ENCODE measurements at regions of chr12 and their contacts with region 1.

Region 1: DNA sequence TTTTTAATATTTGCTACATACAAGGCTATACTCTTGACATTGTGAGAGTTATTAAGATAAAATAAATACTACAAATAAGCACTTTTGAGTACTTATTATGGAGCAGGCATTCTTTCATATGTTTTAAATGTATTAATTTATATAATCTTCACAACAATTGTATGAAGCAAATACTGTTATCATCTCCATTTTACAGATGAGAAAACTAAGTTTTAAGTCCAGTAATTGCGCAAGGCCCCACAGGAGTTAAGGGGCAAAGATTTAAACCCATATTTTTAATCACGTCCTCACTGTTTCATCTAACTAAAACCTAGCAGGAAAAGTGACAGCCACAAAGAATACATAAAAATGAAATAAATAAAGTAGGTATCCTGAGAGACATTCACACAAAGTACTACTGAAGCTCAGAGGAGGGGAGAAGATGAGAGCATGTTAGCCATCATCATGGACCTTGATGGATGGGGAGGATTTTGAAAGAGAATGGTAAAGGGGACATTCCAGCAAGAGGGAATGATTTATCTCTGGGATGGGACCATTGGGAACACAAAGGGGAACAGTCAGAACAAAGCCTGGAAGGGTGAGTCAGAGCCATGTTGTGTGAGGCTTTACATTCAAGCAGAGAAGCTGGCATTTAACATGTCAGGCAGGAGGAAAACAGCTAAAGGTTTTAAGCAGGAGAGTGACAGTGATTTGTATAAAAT is 174.8 kb downstream of the SYT10 start:
- DNase-seq: no peak
- H3K4me3 ChIP-seq: no peak overlapping the region
- H3K27ac ChIP-seq: no peak overlapping the region
- H3K4me1 ChIP-seq: no peaks in the 10 kb centered on the region
- H3K27me3 ChIP-seq: no peaks in the 10 kb centered on the region
- CTCF ChIP-seq: no peak
- POLR2A ChIP-seq: no peak

Region 2: GRCh38 chr12:32344047-32344446 is 920.8 kb before region 1 on chr12:
- intact Hi-C with region 1: loop called (anchors 5 kb)
- DNase-seq: no peak
- H3K4me3 ChIP-seq: no peak overlapping the region
- H3K27ac ChIP-seq: no peak overlapping the region
- H3K4me1 ChIP-seq: no peaks in the 10 kb centered on the region
- H3K27me3 ChIP-seq: no peaks in the 10 kb centered on the region
- CTCF ChIP-seq: no peak
- POLR2A ChIP-seq: no peak

Region 3: DNA sequence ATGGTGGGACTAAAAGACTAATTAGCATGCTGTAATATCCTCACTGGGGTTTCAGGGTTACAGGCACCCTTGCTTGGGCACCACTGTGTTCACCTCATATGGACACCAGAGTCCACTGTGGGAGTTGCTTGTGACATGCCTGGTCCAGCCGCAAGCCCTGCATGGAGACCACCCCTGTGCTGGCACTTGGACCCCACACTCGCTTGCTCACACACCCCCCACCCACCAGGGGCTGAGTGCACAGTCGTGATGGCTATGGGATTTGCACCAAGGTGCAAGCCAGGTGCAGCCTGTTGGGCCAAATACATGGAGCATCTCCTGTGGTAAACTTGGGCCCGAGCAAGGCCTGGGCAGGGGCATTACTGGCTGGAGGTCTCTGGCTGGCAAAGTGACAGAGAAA is 45.6 kb after region 1 on chr12:
- intact Hi-C with region 1: no loop called
- DNase-seq: no peak
- H3K4me3 ChIP-seq: no peak overlapping the region
- H3K27ac ChIP-seq: no peak overlapping the region
- H3K4me1 ChIP-seq: no peaks in the 10 kb centered on the region
- H3K27me3 ChIP-seq: no peaks in the 10 kb centered on the region
- CTCF ChIP-seq: no peak
- POLR2A ChIP-seq: no peak

Region 4: DNA sequence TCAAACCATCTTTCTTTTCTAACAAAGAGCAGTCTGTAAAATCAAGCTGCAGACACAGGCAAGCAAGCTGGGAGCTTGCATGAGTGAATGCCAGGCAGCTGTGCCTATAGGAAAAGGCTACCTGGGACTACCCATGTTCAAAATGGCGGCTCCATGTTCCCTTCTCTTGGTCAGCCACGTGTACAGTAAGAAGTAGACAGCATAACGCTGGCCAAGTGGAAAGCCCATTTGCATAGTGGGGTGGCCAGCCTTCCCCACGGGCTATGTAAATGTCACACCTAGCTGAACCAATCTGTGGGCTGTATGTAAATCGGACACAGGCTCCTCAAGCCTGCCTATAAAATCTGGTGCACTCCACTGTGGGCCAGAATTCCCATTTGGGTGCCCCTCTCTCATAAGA is 57.7 kb after region 1 on chr12:
- intact Hi-C with region 1: no loop called
- DNase-seq: no peak
- H3K4me3 ChIP-seq: no peak overlapping the region
- H3K27ac ChIP-seq: no peak overlapping the region
- H3K4me1 ChIP-seq: no peaks in the 10 kb centered on the region
- H3K27me3 ChIP-seq: no peaks in the 10 kb centered on the region
- CTCF ChIP-seq: no peak
- POLR2A ChIP-seq: no peak

Region 5: DNA sequence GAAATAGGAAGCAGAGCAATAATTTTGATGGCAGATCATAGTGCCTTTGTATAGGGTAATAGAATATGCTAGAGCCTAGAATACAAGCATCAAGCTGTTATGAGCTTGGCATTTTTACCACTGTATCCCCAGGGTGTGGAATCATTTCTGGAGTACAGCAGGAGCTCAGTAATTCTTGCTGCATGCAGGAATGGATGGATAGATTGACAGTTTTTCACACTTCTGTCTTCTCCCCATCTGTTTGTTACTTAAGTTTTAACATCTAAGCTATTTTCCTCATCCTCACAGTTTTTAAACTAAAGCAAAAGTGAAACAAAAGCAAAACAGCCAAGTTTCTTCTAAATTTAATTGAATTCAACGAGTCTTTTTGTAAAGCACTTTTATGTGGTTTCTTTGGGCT is 790.1 kb after region 1 on chr12:
- intact Hi-C with region 1: no loop called
- DNase-seq: no peak
- H3K4me3 ChIP-seq: no peak overlapping the region
- H3K27ac ChIP-seq: no peak overlapping the region
- H3K4me1 ChIP-seq: no peaks in the 10 kb centered on the region
- H3K27me3 ChIP-seq: no peaks in the 10 kb centered on the region
- CTCF ChIP-seq: no peak
- POLR2A ChIP-seq: no peak

Measured in vagina (tissue), 2 donors.